Activated CD4-positive, alpha-beta memory T cell treated with anti-CD3 and anti-CD28 coated beads, Interleukin-2, amount 10 ng/mL, durations not matched to agents 7 days and 5 days (primary cell): ENCODE measurements at regions of chr16 and their contacts with region 1.

Region 1: GRCh38 chr16:67719048-67719777 is at the start of gene GFOD2:
- DNase-seq: peak; percentile 98
- H3K4me3 Mint-ChIP-seq: peak within 1 kb of the TSS; percentile 98
- H3K27ac Mint-ChIP-seq: peak within 1 kb of the TSS; percentile 96
- H3K4me1 Mint-ChIP-seq: peaks cover 44% of the 10 kb centered on the region
- H3K27me3 Mint-ChIP-seq: no peaks in the 10 kb centered on the region
- total RNA-seq, gene GFOD2: 13.0 to 14.9 TPM

Region 2: DNA sequence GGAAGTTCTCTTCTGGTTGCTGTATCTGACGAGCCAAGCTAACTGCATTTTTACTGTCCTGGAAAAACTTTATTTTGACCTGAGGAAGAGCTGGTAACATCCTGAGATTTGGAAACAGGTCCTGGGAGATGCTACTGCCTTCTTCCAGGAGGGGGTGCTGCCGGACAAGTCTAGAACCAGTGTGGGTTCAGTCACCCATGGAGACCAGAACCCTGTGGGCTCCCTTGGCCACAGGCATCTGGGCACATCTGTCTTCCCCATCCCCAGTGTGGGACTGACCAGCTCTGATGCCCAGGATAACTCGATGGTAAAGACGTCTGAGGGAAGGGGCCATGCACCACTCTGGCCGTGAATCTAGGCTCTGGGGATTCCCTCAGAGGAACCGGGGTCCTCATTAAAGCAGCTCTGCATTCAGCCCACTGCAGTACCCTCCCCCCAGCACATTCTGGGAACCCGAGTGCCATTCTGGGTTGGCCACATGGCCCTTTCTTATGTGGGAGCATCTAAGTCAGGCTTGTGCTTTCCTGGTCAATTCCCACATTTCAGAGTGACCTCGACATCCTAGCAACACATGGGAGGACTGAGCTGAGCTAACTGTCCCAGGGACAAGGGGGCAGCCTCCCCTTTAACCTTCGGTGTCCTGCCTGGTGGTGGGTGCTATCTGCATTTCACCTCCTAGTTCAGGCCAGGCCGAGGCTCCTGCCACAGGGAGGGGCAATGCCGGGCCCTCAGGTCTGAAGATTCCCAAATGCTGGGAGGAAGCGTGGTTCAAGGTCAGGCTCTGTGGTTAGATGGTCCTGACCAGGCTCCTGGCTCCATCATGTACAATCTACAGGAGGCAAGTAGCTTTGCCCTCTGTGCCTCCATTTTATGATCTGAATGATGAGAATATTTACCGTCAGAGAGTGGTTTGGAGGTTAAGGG is 46.2 kb before region 1 on chr16:
- CTCF ChIA-PET with region 1: interaction called, 17 read pairs
- POLR2A ChIA-PET with region 1: interaction called, 7 read pairs
- DNase-seq: peak; percentile 72
- H3K4me3 Mint-ChIP-seq: no peak overlapping the region
- H3K27ac Mint-ChIP-seq: no peak overlapping the region
- H3K4me1 Mint-ChIP-seq: peaks cover 5% of the 10 kb centered on the region
- H3K27me3 Mint-ChIP-seq: no peaks in the 10 kb centered on the region

Region 3: DNA sequence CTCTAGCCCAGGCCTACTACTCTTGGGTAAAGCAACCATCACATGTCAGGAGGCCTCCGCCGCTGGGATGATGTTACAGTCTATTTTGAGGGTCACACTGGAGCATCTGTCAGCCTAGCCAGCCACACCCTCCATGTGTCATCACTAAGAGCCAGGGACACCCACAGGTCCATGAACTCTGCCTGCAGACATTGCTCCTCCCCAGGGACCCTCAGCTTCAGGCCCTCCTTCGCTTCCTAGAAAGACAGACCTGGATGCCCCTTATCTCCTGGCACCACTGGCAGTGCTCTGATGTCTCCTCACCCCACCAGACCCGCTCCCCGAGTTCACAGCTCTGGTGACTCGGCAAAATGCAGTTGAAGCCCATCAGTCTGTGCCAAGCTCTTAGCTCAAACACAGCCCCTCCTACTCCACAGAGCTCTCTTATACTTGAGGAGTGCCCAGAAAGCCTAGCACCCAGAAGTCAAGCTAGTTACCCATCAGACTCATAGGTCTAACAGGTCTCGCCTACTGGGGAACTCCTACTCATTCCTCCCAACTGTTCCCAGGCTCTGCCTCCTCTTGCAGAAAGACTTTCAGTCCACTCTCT is 81.2 kb after region 1 on chr16:
- CTCF ChIA-PET with region 1: no interaction called
- POLR2A ChIA-PET with region 1: interaction called, 17 read pairs
- DNase-seq: no peak
- H3K4me3 Mint-ChIP-seq: no peak overlapping the region
- H3K27ac Mint-ChIP-seq: peak overlapping the region; percentile 79
- H3K4me1 Mint-ChIP-seq: peaks cover 55% of the 10 kb centered on the region
- H3K27me3 Mint-ChIP-seq: no peaks in the 10 kb centered on the region

Region 4: DNA sequence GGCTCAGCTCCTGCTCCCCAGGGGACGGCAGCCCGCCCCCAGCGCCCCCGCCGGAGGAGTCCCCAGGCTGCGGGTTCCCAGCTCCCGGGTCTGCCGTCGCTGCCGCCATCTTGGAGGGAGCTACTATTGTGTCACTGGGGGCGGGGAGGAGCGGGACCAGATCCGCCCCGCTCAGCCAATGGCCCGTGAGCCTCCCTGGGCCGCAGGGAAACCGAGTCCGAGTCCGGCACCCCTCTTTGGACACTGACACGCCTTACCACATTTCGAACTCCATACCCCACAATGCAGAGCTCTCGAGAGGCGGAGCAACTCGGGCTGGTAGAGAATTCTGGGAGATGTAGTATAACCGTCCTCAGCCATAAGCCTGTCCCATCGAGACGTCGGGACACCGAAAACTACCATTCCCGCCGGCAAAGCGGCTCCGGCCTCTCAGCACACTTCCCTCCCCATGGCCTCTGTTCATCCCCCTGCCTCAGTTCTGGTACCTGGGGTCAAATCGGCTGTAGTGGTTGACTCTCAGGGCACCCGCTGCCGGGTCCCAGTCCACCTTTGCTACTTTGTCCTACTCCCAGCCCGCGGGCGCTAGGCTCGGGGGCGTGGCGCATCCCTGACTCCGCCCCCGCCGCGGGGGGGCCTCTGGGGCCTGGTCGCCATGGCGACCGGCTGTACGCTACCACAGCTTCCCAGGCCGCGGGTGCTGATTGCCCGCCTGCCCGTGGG is 87.4 kb after region 1 on chr16 and contains the starts of genes RANBP10 and TSNAXIP1:
- CTCF ChIA-PET with region 1: interaction called, 7 read pairs
- POLR2A ChIA-PET with region 1: interaction called, 17 read pairs
- DNase-seq: peak; percentile 98
- H3K4me3 Mint-ChIP-seq: peak within 1 kb of the TSS; percentile 90
- H3K27ac Mint-ChIP-seq: peak within 1 kb of the TSS; percentile 86
- H3K4me1 Mint-ChIP-seq: peaks cover 40% of the 10 kb centered on the region
- H3K27me3 Mint-ChIP-seq: no peaks in the 10 kb centered on the region
- total RNA-seq, gene RANBP10: 23.2 to 24.3 TPM
- total RNA-seq, gene TSNAXIP1: 0.20 to 0.25 TPM